ENCODE measurements at regions of chr6 and their contacts with region 1.

Region 1: GRCh38 chr6:150417899-150418826 is 49.4 kb downstream of the IYD start:
- DNase-seq: peak; percentile 55
- H3K4me3 ChIP-seq: peak overlapping the region in 1 of 2 donors; percentile 14
- H3K27ac ChIP-seq: peak overlapping the region in 1 of 2 donors; percentile 26
- H3K4me1 ChIP-seq: no peaks in the 10 kb centered on the region
- H3K27me3 ChIP-seq: no peaks in the 10 kb centered on the region
- CTCF ChIP-seq: peak; percentile 43 to 83 (median 78)
- POLR2A ChIP-seq: no peak

Region 2: GRCh38 chr6:150600301-150601017 is 182.3 kb after region 1 on chr6:
- intact Hi-C with region 1: loop called (anchors 5 kb)
- DNase-seq: peak; percentile 57
- H3K4me3 ChIP-seq: peak overlapping the region; percentile 50 to 51
- H3K27ac ChIP-seq: peak overlapping the region; percentile 35 to 65
- H3K4me1 ChIP-seq: no peaks in the 10 kb centered on the region
- H3K27me3 ChIP-seq: no peaks in the 10 kb centered on the region
- CTCF ChIP-seq: peak in 2 of 4 experiments; percentile 47 to 66
- POLR2A ChIP-seq: no peak

Region 3: GRCh38 chr6:150741633-150742504 is 323.7 kb after region 1 on chr6:
- intact Hi-C with region 1: loop called (anchors 5 kb)
- DNase-seq: no peak
- H3K4me3 ChIP-seq: no peak overlapping the region
- H3K27ac ChIP-seq: no peak overlapping the region
- H3K4me1 ChIP-seq: no peaks in the 10 kb centered on the region
- H3K27me3 ChIP-seq: no peaks in the 10 kb centered on the region
- CTCF ChIP-seq: no peak
- POLR2A ChIP-seq: no peak

Region 4: DNA sequence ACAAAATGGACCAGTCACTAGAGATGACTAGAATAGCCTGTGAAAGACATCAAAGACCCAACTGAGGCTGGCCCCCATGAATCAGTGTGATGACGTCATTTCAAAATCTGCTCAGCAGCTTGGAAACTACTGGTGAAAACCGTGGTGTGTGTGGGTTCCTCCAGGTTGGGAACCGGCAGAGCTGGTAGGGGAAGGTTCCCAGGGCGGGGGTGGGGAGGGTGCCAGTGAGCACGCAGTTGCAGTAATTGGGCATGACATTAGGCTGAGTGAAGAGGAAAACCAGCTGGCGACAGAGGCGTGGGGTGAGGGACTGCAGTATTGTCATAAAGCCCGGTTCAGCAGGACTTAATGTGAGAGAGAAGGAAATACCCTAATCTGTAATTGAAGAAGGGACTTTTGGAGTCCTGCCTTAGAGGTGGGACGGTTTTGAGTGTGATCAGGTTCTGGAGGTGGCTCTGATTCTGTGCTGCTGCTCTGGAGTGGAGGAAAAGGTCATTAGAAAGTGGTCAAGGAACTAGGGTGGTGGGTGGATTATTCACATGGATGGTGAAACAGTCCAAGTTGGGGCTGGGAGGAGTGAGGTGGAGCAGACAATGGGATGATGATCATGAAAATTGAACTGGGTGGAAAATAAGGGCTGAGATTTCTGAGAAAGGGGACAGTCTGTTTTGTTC is 395.3 kb after region 1 on chr6:
- intact Hi-C with region 1: loop called (anchors 1 kb)
- DNase-seq: no peak
- H3K4me3 ChIP-seq: no peak overlapping the region
- H3K27ac ChIP-seq: no peak overlapping the region
- H3K4me1 ChIP-seq: no peaks in the 10 kb centered on the region
- H3K27me3 ChIP-seq: no peaks in the 10 kb centered on the region
- CTCF ChIP-seq: no peak
- POLR2A ChIP-seq: no peak

Measured in prostate gland (tissue), 2 donors.